ENCODE measurements at regions of chr7 and their contacts with region 1.

Region 1: DNA sequence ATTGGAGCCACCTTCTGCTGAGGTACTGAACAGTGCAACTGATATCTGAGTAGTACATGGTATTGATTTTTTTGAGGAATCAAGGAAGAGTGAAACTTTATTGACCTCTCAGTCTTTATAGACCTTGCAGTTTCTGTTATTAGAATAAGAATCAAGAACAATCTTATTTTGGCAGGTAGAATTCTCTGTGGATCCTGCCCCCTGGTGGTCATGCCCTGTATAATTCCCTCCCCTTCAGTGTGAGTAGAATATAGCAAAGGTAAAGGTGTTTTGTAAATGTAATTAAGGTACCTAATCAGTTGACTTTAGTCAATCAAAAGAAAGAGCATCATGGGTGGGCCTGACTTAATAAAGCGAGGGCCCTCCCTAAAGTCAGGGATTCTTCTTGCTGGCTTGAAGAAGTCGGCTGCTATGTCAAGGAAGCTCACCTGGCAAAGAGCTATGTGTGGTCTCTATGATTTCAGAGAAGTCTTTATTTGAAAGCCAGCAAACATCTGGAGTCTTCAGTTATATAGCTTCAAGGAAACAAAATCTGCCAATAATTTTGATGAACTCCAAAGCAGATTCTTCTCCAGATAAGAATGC is 142.8 kb downstream of the LSM5 start:
- H3K4me3 ChIP-seq: no peak overlapping the region
- H3K27ac ChIP-seq: no peak overlapping the region
- H3K4me1 ChIP-seq: no peaks in the 10 kb centered on the region
- CTCF ChIP-seq: no peak

Region 2: GRCh38 chr7:31744294-31744874 is 603.0 kb before region 1 on chr7:
- CTCF ChIA-PET with region 1: interaction called, 10 read pairs
- POLR2A ChIA-PET with region 1: no interaction called
- H3K4me3 ChIP-seq: no peak overlapping the region
- H3K27ac ChIP-seq: no peak overlapping the region
- H3K4me1 ChIP-seq: no peaks in the 10 kb centered on the region
- CTCF ChIP-seq: 0 out of 2 replicates have a peak, but pooled peaks have one; percentile 17

Region 3: DNA sequence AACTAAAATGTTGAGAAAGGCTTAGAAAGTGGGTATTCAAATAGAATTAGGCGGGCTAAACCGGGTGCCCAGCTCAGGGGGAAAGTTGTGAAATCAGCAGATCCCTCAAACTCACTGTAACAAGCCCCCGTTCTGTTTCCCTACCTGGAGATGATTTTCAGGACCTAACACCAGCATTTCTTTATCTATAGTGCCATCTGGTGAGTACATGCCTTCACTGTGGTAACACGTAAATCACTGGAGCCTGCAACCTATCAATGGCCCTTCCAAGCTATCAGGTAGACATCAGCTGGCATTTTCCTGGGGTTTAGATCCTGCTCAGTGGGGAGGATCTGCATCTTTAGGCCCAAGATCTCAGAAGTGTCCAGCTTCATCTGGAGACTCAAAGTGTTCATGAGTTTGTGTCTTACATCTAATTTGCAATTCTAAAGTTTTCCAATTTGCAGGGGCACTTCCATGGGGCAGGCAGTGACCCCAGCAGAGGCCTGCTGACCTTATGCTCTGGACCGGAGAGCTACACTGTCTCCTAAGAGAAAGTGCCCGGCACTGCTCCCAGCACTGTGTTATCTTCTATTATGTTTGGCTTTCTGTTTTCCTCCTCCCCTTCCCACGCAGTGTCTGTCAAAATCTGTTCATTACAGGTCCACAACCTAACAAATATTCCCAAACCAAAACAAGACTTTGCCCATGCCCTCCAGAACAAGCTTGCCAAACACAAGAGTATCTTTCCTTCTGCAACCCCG is 10.4 kb after region 1 on chr7:
- CTCF ChIA-PET with region 1: interaction called, 13 read pairs
- POLR2A ChIA-PET with region 1: interaction called, 3 read pairs
- H3K4me3 ChIP-seq: no peak overlapping the region
- H3K27ac ChIP-seq: no peak overlapping the region
- H3K4me1 ChIP-seq: no peaks in the 10 kb centered on the region
- CTCF ChIP-seq: no peak

Measured in HEK293 (cell line).